Activated CD8-positive, alpha-beta T cell treated with anti-CD3 and anti-CD28 coated beads, Interleukin-2, amount 10 ng/mL, durations not matched to agents 7 days and 5 days (primary cell): ENCODE measurements at regions of chr5 and their contacts with region 1.

Region 1: DNA sequence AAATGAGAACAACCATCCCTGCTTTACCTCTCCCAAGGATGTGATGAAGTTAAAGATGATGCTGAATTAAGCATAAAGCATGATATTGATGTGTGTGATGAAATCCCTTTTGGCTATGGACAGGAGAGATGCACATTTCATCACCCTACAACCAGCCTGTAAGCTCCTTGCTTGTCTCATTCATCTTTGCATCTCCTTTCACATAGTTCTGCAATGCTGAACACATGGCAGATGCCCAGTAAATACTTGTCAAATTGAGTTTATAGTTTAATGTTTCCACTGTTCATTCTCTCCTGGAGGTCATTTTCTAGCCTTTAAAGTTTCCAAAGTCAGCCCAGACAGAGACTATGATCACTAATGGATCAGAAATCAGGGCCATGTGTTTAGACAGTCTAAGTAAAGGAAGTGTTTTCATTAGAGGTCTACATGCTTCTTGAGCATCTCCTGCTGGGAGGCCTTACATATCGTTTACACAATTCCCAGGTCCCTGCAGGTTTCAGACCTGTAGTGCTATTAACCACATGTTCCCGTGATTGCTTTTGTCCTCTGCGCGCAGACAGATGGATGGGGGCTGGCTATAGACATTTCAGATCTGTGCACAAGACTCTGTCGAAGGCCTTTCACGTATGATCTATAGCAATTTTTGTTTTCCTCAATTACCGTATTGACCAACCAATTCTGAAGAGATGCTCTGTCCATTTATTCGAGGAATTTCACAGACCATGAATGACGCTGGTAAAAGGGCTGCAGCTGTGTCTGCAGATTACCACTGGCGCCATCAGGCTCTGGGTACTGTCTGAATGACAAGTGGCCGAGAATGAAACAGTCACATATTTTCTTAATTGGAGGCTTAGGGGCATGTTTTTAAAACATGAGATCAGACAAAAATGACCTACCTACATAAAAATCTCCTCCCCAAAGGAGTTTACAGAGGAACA is 49.0 kb upstream of the CKMT2 start:
- DNase-seq: no peak
- ATAC-seq: no peak
- H3K4me3 Mint-ChIP-seq: no peak overlapping the region
- H3K27ac Mint-ChIP-seq: no peak overlapping the region
- H3K4me1 Mint-ChIP-seq: peaks cover 31% of the 10 kb centered on the region
- H3K27me3 Mint-ChIP-seq: no peaks in the 10 kb centered on the region

Region 2: GRCh38 chr5:81194633-81195333 is 10.7 kb after region 1 on chr5:
- CTCF ChIA-PET with region 1: interaction called, 24 read pairs
- POLR2A ChIA-PET with region 1: no interaction called
- DNase-seq: peak; percentile 88
- ATAC-seq: peak; percentile 99
- H3K4me3 Mint-ChIP-seq: peak overlapping the region; percentile 36
- H3K27ac Mint-ChIP-seq: peak overlapping the region; percentile 58
- H3K4me1 Mint-ChIP-seq: peaks cover 9% of the 10 kb centered on the region
- H3K27me3 Mint-ChIP-seq: no peaks in the 10 kb centered on the region

Region 3: GRCh38 chr5:81233080-81233634 is 49.1 kb after region 1 on chr5 and contains the start of gene CKMT2:
- CTCF ChIA-PET with region 1: no interaction called
- POLR2A ChIA-PET with region 1: no interaction called
- DNase-seq: no peak
- ATAC-seq: no peak
- H3K4me3 Mint-ChIP-seq: no peak within 1 kb of the TSS
- H3K27ac Mint-ChIP-seq: no peak within 1 kb of the TSS
- H3K4me1 Mint-ChIP-seq: peaks cover 35% of the 10 kb centered on the region
- H3K27me3 Mint-ChIP-seq: no peaks in the 10 kb centered on the region
- total RNA-seq, gene CKMT2: not detected